Posterior cingulate gyrus (tissue), 11 donors: ENCODE measurements at regions of chr12 and their contacts with region 1.

Region 1: GRCh38 chr12:104108755-104109445 is 29.1 kb downstream of the NFYB start:
- DNase-seq: peak; percentile 65 to 97 (median 87)

Region 2: GRCh38 chr12:103877934-103878510 is 230.9 kb before region 1 on chr12:
- intact Hi-C with region 1: loop called (anchors 10 kb)
- DNase-seq: peak in 4 of 10 donors; percentile 15 to 37 (median 23)

Region 3: DNA sequence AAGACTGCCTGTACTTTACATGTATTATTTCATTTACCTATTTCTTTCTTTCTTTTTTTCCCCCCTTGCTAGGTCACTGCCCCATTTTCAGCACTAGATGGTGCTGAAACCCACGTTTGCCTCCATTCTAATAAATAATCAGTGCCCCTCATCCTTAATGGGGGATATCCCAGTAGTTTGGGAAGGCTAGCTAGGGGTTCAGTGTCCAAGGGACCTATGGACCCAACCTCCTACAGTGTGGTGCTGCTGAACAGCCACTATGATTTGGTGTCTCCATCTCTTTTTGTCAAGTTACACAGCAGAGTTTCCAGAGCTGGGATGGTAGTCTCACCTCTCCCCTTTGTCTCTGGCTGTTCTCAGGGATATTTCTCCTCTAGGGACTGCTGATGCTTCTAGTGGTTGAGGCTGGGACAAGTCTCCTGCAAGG is 51.1 kb before region 1 on chr12:
- intact Hi-C with region 1: loop called (anchors 2 kb)
- DNase-seq: no peak

Region 4: GRCh38 chr12:104201238-104202001 is 92.5 kb after region 1 on chr12:
- intact Hi-C with region 1: no loop called
- DNase-seq: peak in 3 of 10 donors; percentile 14 to 36 (median 17)